Calu3 (cell line): ENCODE measurements at regions of chr5 and their contacts with region 1.

Region 1: DNA sequence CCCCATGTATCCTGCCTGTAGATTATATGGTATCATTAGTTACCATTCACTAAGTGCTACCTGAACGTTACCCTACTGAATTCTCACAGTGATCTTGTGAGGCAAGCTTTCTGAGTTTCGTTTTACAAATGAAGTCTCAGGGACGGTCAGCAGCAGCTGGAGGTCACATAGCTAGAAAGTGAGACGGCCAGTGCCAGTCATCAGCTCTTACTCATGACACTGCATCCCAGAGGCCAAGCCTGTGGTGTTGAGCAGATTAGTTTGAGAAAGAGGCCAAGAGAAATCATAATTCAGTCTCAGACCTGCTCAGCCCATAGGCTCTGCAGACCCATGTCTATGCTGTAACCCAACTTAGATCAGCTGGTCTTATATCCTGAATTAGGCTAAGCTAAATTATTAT is 95.7 kb upstream of the EGFLAM start:
- DNase-seq: no peak
- H3K4me3 Mint-ChIP-seq: no peak overlapping the region
- H3K27ac Mint-ChIP-seq: no peak overlapping the region
- H3K4me1 Mint-ChIP-seq: peaks cover 9% of the 10 kb centered on the region
- H3K27me3 Mint-ChIP-seq: no peaks in the 10 kb centered on the region
- CTCF ChIP-seq: no peak

Region 2: DNA sequence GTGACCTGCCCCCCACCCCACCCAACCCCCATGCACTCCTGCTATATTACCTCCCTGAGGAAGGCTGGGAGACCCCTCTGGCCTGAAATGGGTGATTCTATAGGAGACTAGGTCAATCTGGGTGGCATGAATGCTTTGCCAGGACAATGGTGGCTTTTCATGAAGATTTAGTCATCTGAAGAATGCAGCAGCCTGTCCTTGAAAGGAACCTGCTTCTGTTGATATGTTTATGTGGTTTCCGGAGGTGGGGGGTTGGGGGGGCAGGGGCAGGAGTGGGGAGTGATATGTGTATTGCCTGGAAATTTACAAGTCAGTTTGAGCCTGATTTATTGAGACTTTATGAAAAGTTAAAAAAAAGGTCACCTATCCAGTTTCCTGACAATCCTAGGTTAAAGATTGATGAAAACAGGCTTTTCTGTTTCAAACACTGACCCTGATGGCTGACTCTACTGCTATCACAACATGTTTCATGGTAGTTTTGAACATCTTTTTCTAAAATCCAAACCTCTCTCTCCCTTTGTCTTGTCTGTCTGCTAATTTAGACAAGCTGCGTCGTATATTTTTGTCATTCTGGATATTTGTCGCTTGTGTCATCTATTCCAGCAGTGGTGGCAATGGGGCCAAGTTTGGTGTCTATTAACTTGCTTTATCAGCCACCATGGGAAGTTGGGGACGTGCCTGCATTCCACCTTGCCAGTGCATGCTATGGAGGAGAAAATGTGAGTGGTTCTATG is 58.0 kb before region 1 on chr5:
- CTCF ChIA-PET with region 1: no interaction called
- intact Hi-C with region 1: loop called (anchors 5 kb)
- DNase-seq: peak; percentile 23
- H3K4me3 Mint-ChIP-seq: peak overlapping the region; percentile 61
- H3K27ac Mint-ChIP-seq: peak overlapping the region; percentile 93
- H3K4me1 Mint-ChIP-seq: peaks cover 36% of the 10 kb centered on the region
- H3K27me3 Mint-ChIP-seq: no peaks in the 10 kb centered on the region
- CTCF ChIP-seq: no peak

Region 3: GRCh38 chr5:38515646-38516045 is 353.0 kb after region 1 on chr5:
- CTCF ChIA-PET with region 1: no interaction called
- intact Hi-C with region 1: no loop called
- DNase-seq: no peak
- H3K4me3 Mint-ChIP-seq: no peak overlapping the region
- H3K27ac Mint-ChIP-seq: no peak overlapping the region
- H3K4me1 Mint-ChIP-seq: no peaks in the 10 kb centered on the region
- H3K27me3 Mint-ChIP-seq: no peaks in the 10 kb centered on the region
- CTCF ChIP-seq: no peak